Heart right ventricle (tissue), 16 donors: ENCODE measurements at regions of chr3 and their contacts with region 1.

Region 1: GRCh38 chr3:130539005-130539404 is 22.0 kb downstream of the COL6A6 start:
- DNase-seq: no peak
- ATAC-seq: no peak
- H3K4me3 ChIP-seq: no peak overlapping the region
- H3K27ac ChIP-seq: no peak overlapping the region
- H3K4me1 ChIP-seq: peaks cover 0 to 6% (median 0%) of the 10 kb centered on the region in 9 donors
- H3K27me3 ChIP-seq: peaks cover 0 to 12% (median 0%) of the 10 kb centered on the region in 7 donors
- CTCF ChIP-seq: peak in 7 of 9 donors; percentile 38 to 58 (median 47)

Region 2: DNA sequence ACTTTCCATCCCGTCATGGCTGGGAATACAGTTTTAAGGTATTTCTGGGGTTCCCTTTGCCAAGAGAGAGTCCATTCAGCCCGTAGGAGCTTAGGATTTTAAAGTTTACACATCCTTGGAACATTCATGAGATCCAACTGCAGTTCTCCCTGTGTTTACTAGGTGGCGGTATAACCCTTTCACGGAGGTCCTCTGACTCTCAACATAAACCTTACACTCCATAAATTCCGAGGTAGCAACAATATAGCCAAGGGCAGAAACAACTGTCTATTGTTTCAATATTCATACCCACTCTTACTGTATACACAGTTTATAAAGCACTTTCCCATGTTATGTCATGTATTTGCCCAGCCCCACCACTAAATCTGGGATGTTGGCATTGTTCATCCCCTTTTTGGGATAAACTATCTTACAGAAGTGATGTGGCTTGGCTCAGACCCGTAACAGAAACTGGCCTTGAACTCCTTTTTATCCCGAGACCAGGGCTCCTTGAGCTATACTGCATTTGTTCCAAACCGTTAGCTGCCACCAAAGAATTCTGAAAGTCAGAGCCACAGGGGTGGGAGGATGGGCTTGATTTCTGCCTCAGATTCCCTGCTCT is 262.7 kb before region 1 on chr3:
- intact Hi-C with region 1: loop called in 2 of 10 experiments (anchors 10 kb)
- DNase-seq: no peak
- ATAC-seq: peak in 3 of 8 donors; percentile 25 to 62 (median 51)
- H3K4me3 ChIP-seq: no peak overlapping the region
- H3K27ac ChIP-seq: no peak overlapping the region
- H3K4me1 ChIP-seq: no peaks in the 10 kb centered on the region
- H3K27me3 ChIP-seq: peaks cover 0 to 16% (median 0%) of the 10 kb centered on the region in 7 donors
- CTCF ChIP-seq: peak; percentile 20 to 78 (median 70)